MCF 10A (cell line): ENCODE measurements at regions of chr16 and their contacts with region 1.

Region 1: GRCh38 chr16:2911580-2912329 is at the start of gene FLYWCH1:
- DNase-seq: peak; percentile 97
- H3K4me3 Mint-ChIP-seq: peak within 1 kb of the TSS; percentile 74
- H3K27ac Mint-ChIP-seq: peak within 1 kb of the TSS; percentile 81
- H3K4me1 Mint-ChIP-seq: peaks cover 19% of the 10 kb centered on the region
- H3K27me3 Mint-ChIP-seq: no peaks in the 10 kb centered on the region
- CTCF ChIP-seq: no peak
- total RNA-seq, gene FLYWCH1: 76.3 and 86.2 TPM in 2 replicates

Region 2: DNA sequence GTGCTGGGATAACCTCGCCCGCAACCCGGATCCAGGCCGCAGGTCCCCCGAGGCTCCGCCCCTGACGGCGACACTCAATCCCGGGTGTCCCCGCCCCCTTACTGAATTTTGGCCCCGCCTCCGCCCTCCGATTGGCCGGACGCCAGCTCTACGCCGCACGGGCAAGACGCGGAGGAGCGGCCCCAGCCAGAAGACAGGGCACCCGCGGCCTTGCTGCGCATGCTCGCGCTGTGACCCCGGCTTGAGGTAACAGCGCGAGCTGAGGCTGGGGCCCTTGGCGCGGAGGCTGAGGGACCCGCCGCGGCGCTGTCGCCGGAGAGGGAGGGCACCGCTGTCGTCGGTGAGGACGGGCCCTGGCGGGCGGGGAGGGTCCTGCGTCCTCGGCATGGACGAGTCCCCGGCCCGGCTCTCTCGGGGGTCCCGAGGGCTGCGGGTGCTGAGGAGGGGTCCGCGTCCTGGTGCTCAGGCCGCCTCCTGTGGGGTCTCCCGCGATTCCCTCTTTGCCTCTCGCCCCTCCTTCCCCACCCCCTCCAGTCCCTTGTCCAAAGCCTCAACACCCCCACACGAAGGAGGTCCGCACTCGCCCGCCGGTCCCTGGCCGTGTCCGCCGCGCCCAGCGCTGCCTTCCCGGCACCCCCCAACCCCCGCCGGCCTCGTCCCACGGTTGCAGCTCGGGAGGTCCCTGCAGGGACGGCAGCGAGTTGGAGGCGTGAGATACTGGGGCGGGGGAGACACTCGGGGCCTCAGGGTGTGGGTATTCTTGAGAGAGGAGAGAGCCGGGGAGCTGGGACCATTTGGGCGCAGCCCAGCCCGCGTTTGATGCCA is 28.5 kb before region 1 on chr16 and contains the start of gene FLYWCH2:
- CTCF ChIA-PET with region 1: interaction called, 3 read pairs
- POLR2A ChIA-PET with region 1: interaction called, 75 read pairs
- intact Hi-C with region 1: no loop called
- DNase-seq: peak; percentile 96
- H3K4me3 Mint-ChIP-seq: peak within 1 kb of the TSS; percentile 77
- H3K27ac Mint-ChIP-seq: peak within 1 kb of the TSS; percentile 73
- H3K4me1 Mint-ChIP-seq: peaks cover 5% of the 10 kb centered on the region
- H3K27me3 Mint-ChIP-seq: no peaks in the 10 kb centered on the region
- CTCF ChIP-seq: no peak
- total RNA-seq, gene FLYWCH2: 24.4 and 27.7 TPM in 2 replicates